Left lung (tissue), 14 donors: ENCODE measurements at regions of chr4 and their contacts with region 1.

Region 1: GRCh38 chr4:80365928-80366327 is 30.4 kb downstream of the CFAP299 start:
- DNase-seq: peak in 3 of 4 donors; percentile 54 to 68 (median 55)
- ATAC-seq: peak; percentile 97
- H3K4me3 ChIP-seq: no peak overlapping the region
- H3K27ac ChIP-seq: no peak overlapping the region
- H3K4me1 ChIP-seq: no peaks in the 10 kb centered on the region
- H3K27me3 ChIP-seq: peaks cover 0 to under 1% of the 10 kb centered on the region in 2 donors
- CTCF ChIP-seq: peak in 1 of 2 donors; percentile 42

Region 2: DNA sequence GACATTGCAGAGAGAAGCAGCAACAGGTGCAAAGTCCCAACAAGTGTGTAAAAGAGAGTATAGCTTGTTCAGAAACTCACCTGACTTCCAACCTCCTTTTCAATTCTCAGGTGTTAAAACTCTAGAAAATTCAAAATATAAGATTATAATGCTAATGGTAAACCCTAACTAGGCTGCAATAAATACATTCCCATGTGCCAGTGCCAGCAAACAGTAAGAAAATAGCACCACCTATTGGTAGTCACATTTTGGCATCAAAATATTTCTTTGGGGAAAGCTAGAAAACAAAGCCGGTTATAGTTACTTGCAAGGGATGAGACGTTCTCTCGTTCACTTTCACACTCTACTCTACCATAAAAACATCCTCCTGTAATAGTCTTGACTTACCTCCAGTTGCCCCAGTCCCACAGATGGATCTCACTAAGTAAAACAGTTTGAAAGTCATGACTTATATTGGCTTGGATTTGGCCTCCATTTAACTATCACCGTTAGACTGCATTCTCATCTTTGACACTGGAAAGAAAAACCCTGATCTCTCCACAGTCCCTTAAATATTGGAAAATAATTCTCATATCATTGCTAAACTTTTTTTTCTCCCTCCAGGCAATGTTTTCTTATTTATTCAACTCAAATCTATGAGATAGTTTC is 674.2 kb after region 1 on chr4:
- intact Hi-C with region 1: loop called in 1 of 2 experiments (anchors 10 kb)
- DNase-seq: peak in 2 of 4 donors; percentile 43 to 60
- ATAC-seq: peak; percentile 84
- H3K4me3 ChIP-seq: no peak overlapping the region
- H3K27ac ChIP-seq: peak overlapping the region in 1 of 2 donors; percentile 42
- H3K4me1 ChIP-seq: no peaks in the 10 kb centered on the region
- H3K27me3 ChIP-seq: no peaks in the 10 kb centered on the region
- CTCF ChIP-seq: peak; percentile 23 to 54